Mammary epithelial cell (primary cell): ENCODE measurements at regions of chr5 and their contacts with region 1.

Region 1: GRCh38 chr5:38193015-38193581 is 65.3 kb upstream of the EGFLAM start:
- DNase-seq: peak; percentile 38
- H3K4me3 ChIP-seq: no peak overlapping the region
- H3K27ac ChIP-seq: no peak overlapping the region
- H3K4me1 ChIP-seq: no peaks in the 10 kb centered on the region
- H3K27me3 ChIP-seq: no peaks in the 10 kb centered on the region
- CTCF ChIP-seq: peak; percentile 90 to 92

Region 2: GRCh38 chr5:37412515-37413277 is 780.4 kb before region 1 on chr5:
- CTCF ChIA-PET with region 1: interaction called, 3 read pairs
- dilution Hi-C with region 1: loop called (anchors 10 kb)
- in situ Hi-C with region 1: loop called (anchors 10 kb)
- intact Hi-C with region 1: loop called (anchors 1 kb)
- DNase-seq: peak; percentile 73
- H3K4me3 ChIP-seq: no peak overlapping the region
- H3K27ac ChIP-seq: no peak overlapping the region
- H3K4me1 ChIP-seq: no peaks in the 10 kb centered on the region
- H3K27me3 ChIP-seq: no peaks in the 10 kb centered on the region
- CTCF ChIP-seq: peak; percentile 97 to 99

Region 3: DNA sequence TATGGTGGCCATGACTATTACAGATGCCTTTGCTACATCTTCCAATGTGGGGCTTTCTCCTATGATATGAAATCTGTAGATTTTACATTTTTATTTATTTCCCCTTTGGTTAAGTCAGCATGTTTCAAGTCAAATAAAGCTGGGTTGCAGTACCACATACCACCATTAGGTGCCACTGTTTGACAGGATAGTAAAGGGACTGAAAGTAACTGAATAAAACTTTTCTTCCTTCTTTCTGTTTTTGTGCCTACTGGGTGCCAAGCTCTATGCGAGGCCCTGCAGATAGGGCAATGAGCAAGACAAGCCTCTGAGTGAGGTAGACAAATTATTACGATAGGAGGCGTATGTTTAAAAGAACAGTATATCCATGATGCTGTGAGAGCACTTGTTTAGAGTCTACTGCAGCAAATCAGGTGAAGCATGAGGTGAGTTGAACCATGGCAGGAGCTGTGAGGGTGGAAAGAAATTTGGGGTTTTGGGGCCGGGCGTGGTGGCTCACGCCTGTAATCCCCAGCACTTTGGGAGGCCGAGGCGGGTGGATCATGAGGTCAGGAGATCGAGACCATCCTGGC is 418.1 kb before region 1 on chr5:
- CTCF ChIA-PET with region 1: no interaction called
- dilution Hi-C with region 1: loop called (anchors 25 kb)
- in situ Hi-C with region 1: no loop called
- intact Hi-C with region 1: loop called (anchors 5 kb)
- DNase-seq: peak; percentile 32
- H3K4me3 ChIP-seq: no peak overlapping the region
- H3K27ac ChIP-seq: no peak overlapping the region
- H3K4me1 ChIP-seq: peaks cover 27% of the 10 kb centered on the region
- H3K27me3 ChIP-seq: no peaks in the 10 kb centered on the region
- CTCF ChIP-seq: peak; percentile 61 to 87

Region 4: DNA sequence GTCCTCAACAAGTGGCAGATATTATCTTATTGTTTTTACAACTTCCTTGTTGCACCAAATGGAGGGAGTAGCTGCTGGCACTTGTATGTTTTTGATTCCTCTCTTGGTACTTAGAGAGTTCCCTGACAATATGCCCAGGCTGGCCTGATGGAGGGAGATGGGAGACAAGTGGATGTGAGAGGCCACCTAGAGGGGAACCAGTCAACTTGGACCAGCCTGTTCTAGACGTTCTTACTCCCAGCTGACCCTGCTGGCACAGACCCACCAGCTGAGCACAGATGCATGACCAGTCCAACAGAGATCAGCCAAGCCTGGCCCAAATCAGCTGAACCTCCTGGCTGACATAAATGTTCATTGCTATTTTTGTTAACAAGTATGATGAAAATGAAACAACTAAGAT is 292.4 kb before region 1 on chr5:
- CTCF ChIA-PET with region 1: no interaction called
- dilution Hi-C with region 1: no loop called
- in situ Hi-C with region 1: no loop called
- intact Hi-C with region 1: loop called (anchors 2 kb)
- DNase-seq: peak; percentile 24
- H3K4me3 ChIP-seq: no peak overlapping the region
- H3K27ac ChIP-seq: no peak overlapping the region
- H3K4me1 ChIP-seq: no peaks in the 10 kb centered on the region
- H3K27me3 ChIP-seq: no peaks in the 10 kb centered on the region
- CTCF ChIP-seq: peak in 1 of 2 donors; percentile 46

Region 5: GRCh38 chr5:38023799-38024198 is 169.3 kb before region 1 on chr5:
- CTCF ChIA-PET with region 1: no interaction called
- dilution Hi-C with region 1: no loop called
- in situ Hi-C with region 1: no loop called
- intact Hi-C with region 1: loop called (anchors 2 kb)
- DNase-seq: no peak
- H3K4me3 ChIP-seq: no peak overlapping the region
- H3K27ac ChIP-seq: no peak overlapping the region
- H3K4me1 ChIP-seq: no peaks in the 10 kb centered on the region
- H3K27me3 ChIP-seq: no peaks in the 10 kb centered on the region
- CTCF ChIP-seq: peak; percentile 23 to 32